MCF 10A (cell line): ENCODE measurements at regions of chr12 and their contacts with region 1.

Region 1: GRCh38 chr12:51326762-51327439 is 2.9 kb upstream of the BIN2 start:
- DNase-seq: peak; percentile 82
- H3K4me3 Mint-ChIP-seq: no peak overlapping the region
- H3K27ac Mint-ChIP-seq: peak overlapping the region; percentile 86
- H3K4me1 Mint-ChIP-seq: peaks cover 11% of the 10 kb centered on the region
- H3K27me3 Mint-ChIP-seq: no peaks in the 10 kb centered on the region
- CTCF ChIP-seq: no peak

Region 2: GRCh38 chr12:51281202-51281924 is 45.5 kb before region 1 on chr12:
- CTCF ChIA-PET with region 1: no interaction called
- POLR2A ChIA-PET with region 1: no interaction called
- intact Hi-C with region 1: loop called (anchors 5 kb)
- DNase-seq: peak; percentile 35
- H3K4me3 Mint-ChIP-seq: no peak overlapping the region
- H3K27ac Mint-ChIP-seq: no peak overlapping the region
- H3K4me1 Mint-ChIP-seq: no peaks in the 10 kb centered on the region
- H3K27me3 Mint-ChIP-seq: no peaks in the 10 kb centered on the region
- CTCF ChIP-seq: no peak